Esophagus muscularis mucosa (tissue), 4 donors: ENCODE measurements at regions of chr20 and their contacts with region 1.

Region 1: GRCh38 chr20:53578492-53579222 is 15.0 kb downstream of the ZNF217 start:
- DNase-seq: no peak
- H3K4me3 ChIP-seq: peak overlapping the region in 3 of 4 donors; percentile 10 to 36 (median 16)
- H3K27ac ChIP-seq: peak overlapping the region; percentile 62 to 76 (median 71)
- H3K4me1 ChIP-seq: peaks cover 46 to 58% (median 53%) of the 10 kb centered on the region in 4 donors
- H3K27me3 ChIP-seq: no peaks in the 10 kb centered on the region
- CTCF ChIP-seq: peak; percentile 85 to 93 (median 87)
- EP300 ChIP-seq: no peak
- POLR2A ChIP-seq: no peak

Region 2: GRCh38 chr20:53773792-53774401 is 195.2 kb after region 1 on chr20:
- intact Hi-C with region 1: loop called (anchors 5 kb)
- DNase-seq: no peak
- H3K4me3 ChIP-seq: no peak overlapping the region
- H3K27ac ChIP-seq: peak overlapping the region; percentile 52 to 71 (median 62)
- H3K4me1 ChIP-seq: peaks cover 16 to 32% (median 24%) of the 10 kb centered on the region in 4 donors
- H3K27me3 ChIP-seq: no peaks in the 10 kb centered on the region
- CTCF ChIP-seq: no peak
- EP300 ChIP-seq: no peak
- POLR2A ChIP-seq: no peak

Region 3: DNA sequence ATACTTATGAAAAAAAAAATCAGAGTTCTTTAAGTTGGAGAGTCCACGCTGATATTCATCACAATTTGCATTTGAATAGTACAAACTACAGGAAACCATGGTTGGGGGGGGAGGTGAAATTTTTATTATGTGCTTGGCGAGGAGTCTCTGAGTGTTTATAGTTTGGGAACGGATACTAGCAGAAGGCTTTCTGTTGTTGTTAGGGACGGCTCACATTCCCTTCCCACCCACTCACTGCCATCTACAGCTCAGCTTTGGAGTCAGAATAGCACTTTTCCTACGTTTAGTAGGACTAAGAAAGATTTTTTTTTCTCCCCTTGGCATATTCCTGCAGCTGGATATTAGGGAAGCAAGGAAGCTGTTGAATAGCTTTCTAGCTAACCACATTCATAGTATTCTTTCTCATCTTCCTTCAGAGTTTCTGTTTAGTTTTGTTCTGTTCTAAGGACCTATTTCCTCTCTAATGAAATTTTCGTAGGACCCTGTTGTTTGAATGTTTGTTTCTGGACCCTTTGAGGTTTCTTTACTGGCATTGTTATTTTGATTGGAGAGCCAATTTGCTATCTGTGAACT is 250.1 kb after region 1 on chr20:
- intact Hi-C with region 1: loop called (anchors 5 kb)
- DNase-seq: no peak
- H3K4me3 ChIP-seq: peak overlapping the region; percentile 23 to 47 (median 38)
- H3K27ac ChIP-seq: peak overlapping the region; percentile 71 to 84 (median 76)
- H3K4me1 ChIP-seq: peaks cover 20 to 39% (median 36%) of the 10 kb centered on the region in 4 donors
- H3K27me3 ChIP-seq: no peaks in the 10 kb centered on the region
- CTCF ChIP-seq: no peak
- EP300 ChIP-seq: no peak
- POLR2A ChIP-seq: no peak

Region 4: GRCh38 chr20:53869466-53870258 is 291.0 kb after region 1 on chr20:
- intact Hi-C with region 1: loop called (anchors 2 kb)
- DNase-seq: no peak
- H3K4me3 ChIP-seq: no peak overlapping the region
- H3K27ac ChIP-seq: peak overlapping the region; percentile 32 to 62 (median 44)
- H3K4me1 ChIP-seq: peaks cover 33 to 58% (median 50%) of the 10 kb centered on the region in 4 donors
- H3K27me3 ChIP-seq: no peaks in the 10 kb centered on the region
- CTCF ChIP-seq: peak; percentile 77 to 84 (median 79)
- EP300 ChIP-seq: no peak
- POLR2A ChIP-seq: no peak

Region 5: DNA sequence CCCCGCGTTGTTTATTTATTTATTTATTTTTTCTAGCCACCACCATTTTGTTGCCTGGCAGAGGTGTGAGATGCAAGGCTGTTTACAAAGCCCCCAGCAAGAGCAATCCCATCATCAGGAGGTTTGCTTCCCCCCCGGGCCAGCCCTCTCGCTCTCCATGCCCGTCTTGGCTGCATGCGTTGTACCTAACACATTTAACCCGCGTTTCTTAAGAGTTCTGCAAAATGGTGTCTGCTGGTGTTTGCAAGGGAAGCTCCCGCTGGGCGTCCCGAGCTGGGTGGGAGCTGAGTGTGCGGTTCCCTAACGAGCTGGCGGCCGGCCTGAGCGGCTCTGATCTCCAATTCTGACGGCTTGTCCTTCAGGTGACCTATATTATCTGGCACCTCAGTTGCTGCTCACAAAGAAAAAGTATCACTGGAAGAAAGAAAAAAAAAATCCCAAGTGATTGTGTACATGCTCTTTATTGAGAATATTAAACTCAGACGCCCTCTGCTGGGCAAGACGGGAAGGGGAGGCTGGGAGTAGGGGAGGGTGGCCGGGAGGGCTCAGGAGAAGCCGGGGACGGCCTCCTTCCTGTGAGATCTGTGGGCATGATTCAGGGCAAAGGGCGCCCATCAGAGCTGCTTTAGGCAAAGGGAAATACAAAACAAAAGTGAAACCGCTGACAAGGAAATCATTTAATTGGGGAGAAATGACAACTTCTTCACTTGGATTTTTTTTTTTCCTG is 337.0 kb after region 1 on chr20:
- intact Hi-C with region 1: loop called (anchors 2 kb)
- DNase-seq: peak; percentile 98
- H3K4me3 ChIP-seq: peak overlapping the region; percentile 62 to 83 (median 68)
- H3K27ac ChIP-seq: peak overlapping the region; percentile 83 to 85 (median 84)
- H3K4me1 ChIP-seq: peaks cover 33 to 36% (median 34%) of the 10 kb centered on the region in 4 donors
- H3K27me3 ChIP-seq: no peaks in the 10 kb centered on the region
- CTCF ChIP-seq: peak; percentile 89 to 96 (median 96)
- EP300 ChIP-seq: no peak
- POLR2A ChIP-seq: no peak

Region 6: DNA sequence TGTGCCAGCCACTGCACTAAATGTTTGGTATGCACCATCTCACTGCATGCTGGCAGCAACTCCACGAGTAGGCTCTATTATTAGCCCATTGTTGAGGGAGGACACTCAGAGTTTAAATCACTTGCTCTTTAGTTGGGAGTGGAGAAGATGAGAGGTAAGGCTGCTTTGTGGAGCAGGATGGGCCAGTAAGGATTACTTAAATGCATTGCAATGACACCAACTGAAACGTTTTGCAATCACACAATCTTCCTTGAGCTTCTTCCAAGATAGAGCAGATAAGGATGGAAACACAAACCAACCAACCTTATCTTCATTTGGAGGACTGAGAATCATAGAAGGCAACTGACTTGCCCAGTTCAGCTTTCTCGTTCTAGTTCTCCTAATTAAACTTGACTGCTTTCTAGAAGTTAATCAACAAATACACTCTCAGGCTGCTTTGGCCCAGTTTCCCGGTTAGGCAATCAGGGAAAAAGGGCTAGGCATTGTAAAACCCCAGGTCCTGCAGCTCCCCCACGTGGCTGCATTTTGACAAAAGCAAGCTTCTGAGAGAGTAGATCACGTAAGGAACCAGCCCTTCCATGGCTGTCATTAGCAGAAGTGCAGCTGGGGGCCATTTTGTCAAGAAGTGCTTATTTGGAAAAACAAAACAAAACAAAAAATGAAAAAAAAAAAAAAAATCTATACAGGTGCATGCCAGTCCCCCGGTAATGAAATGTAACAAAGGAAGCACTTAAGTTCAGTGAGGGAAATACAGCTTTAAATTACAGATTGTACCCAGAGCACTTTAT is 361.1 kb after region 1 on chr20:
- intact Hi-C with region 1: loop called (anchors 5 kb)
- DNase-seq: peak; percentile 95
- H3K4me3 ChIP-seq: no peak overlapping the region
- H3K27ac ChIP-seq: peak overlapping the region; percentile 52 to 66 (median 60)
- H3K4me1 ChIP-seq: peaks cover 30 to 50% (median 41%) of the 10 kb centered on the region in 4 donors
- H3K27me3 ChIP-seq: no peaks in the 10 kb centered on the region
- CTCF ChIP-seq: peak; percentile 67 to 70 (median 67)
- EP300 ChIP-seq: no peak
- POLR2A ChIP-seq: no peak